ENCODE measurements at regions of chr17 and their contacts with region 1.

Region 1: GRCh38 chr17:7004398-7005253 is 7.8 kb upstream of the RNASEK start:
- DNase-seq: peak; percentile 53
- H3K4me3 Mint-ChIP-seq: no peak overlapping the region
- H3K27ac Mint-ChIP-seq: no peak overlapping the region
- H3K4me1 Mint-ChIP-seq: peaks cover 14% of the 10 kb centered on the region
- H3K27me3 Mint-ChIP-seq: no peaks in the 10 kb centered on the region

Region 2: DNA sequence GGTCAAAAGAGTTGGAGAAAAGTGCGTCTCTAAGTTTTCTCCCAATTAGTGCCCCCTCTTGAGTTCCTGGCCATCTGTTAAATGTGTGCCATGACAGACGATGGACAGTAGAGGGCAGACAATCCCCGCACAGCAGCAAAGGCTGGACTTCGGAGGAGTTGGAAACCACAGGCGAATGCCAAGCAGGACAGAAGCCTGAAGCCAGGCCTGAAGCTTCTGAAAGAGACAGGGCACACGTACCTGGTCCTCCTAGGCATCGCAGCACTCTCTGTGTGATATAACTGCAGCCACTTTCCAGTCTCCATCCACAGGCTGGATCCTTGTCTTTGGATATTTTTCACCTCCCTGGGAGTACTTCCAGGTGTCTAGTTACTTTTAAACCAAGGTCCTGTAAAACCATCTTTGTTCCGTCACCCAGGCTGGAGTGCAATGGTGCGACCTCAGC is 338.5 kb before region 1 on chr17:
- CTCF ChIA-PET with region 1: no interaction called
- intact Hi-C with region 1: loop called (anchors 1 kb)
- DNase-seq: peak; percentile 65
- H3K4me3 Mint-ChIP-seq: no peak overlapping the region
- H3K27ac Mint-ChIP-seq: no peak overlapping the region
- H3K4me1 Mint-ChIP-seq: peaks cover 10% of the 10 kb centered on the region
- H3K27me3 Mint-ChIP-seq: no peaks in the 10 kb centered on the region

Region 3: DNA sequence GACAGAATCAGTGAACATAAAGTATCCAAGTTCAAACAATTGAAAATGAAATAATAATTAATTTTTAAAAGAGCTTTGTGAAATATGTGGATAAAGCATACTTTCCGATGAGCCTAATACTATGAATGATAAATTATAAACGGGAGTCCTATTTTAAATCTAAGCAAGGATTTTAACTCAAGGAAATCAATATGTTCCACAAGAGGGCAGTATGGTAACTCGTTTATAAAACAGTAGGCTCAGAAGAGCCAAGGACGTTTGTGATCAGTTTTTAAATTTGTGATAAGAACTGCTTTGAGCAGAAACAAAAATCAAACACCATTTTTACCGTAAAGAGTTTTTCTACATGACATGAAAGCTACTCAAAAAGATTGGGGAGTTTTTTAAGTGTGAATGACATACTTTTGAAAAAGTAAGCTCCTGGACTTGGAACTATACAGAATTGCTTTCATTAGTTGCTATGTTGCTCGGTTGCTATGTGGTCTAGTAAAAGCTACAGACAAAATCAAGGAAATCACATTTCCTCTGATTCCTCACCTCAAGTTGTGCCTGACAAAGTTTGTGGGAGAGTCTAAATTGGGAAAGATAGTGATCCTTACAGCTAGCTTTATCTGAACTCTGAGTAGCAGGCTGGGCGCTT is 161.3 kb before region 1 on chr17:
- CTCF ChIA-PET with region 1: interaction called, 13 read pairs
- intact Hi-C with region 1: loop called (anchors 2 kb)
- DNase-seq: no peak
- H3K4me3 Mint-ChIP-seq: no peak overlapping the region
- H3K27ac Mint-ChIP-seq: no peak overlapping the region
- H3K4me1 Mint-ChIP-seq: peaks cover 5% of the 10 kb centered on the region
- H3K27me3 Mint-ChIP-seq: peaks cover 21% of the 10 kb centered on the region

Region 4: DNA sequence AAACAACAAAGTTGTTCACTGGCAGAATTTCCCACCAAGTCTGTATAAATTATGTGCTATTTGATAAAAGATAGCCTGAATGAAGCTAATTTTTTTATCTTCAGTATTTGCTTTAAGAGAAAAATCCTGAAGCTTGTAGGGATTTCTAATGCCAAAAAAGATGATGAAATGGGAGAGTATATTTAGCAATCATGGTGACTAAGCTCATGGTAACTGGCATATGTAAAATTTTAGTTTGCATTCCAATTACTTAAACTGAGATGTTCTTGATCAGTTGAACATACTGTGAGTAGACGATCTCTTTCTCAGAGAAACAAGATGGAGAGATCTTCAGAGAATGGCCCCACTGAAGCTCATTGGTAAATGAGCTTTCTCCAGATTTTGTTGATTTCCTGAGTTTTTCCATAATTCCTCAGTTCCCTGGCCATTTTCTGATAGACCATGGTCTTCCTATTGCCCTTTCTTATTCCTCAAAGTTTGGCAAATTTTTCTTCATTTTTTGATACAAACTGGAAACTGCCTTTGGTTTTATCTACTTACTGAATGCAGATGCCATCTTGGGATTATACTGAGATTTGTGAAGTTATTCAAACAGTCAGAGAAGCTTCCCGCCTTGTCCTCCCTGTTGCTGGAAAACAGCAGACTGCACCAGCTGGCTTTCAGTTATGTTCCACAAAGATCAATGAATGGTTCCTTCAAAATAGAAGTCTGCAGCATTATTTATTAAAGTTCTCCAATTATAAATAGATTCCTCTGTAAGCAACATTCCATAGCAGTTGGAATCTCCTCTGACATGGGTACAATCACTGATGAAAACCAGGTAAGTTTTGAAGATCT is 77.1 kb before region 1 on chr17:
- CTCF ChIA-PET with region 1: interaction called, 10 read pairs
- intact Hi-C with region 1: no loop called
- DNase-seq: no peak
- H3K4me3 Mint-ChIP-seq: no peak overlapping the region
- H3K27ac Mint-ChIP-seq: no peak overlapping the region
- H3K4me1 Mint-ChIP-seq: peaks cover 23% of the 10 kb centered on the region
- H3K27me3 Mint-ChIP-seq: no peaks in the 10 kb centered on the region

Region 5: DNA sequence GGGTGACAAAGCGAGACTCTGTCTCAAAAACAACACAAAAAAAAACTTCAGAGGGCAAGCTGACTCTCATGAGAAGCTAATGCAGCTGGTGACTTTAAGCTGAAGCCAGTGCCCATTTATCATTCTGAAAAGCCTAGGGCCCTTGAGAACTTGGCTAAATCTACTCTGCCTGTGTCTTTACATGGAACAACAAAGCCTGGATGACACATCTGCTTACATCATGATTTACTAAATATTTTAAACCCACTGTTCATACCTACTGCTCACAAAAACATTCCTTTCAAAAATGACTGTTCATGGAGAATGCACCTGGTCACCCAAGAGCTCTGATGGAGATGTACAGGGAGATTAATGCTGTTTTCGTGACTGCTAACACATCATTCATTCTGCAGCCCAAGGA is 14.8 kb before region 1 on chr17:
- CTCF ChIA-PET with region 1: interaction called, 19 read pairs
- intact Hi-C with region 1: no loop called
- DNase-seq: no peak
- H3K4me3 Mint-ChIP-seq: no peak overlapping the region
- H3K27ac Mint-ChIP-seq: no peak overlapping the region
- H3K4me1 Mint-ChIP-seq: no peaks in the 10 kb centered on the region
- H3K27me3 Mint-ChIP-seq: no peaks in the 10 kb centered on the region

Region 6: GRCh38 chr17:7021993-7022778 is 17.6 kb after region 1 on chr17:
- CTCF ChIA-PET with region 1: interaction called, 16 read pairs
- intact Hi-C with region 1: loop called (anchors 1 kb)
- DNase-seq: peak; percentile 80
- H3K4me3 Mint-ChIP-seq: peak overlapping the region; percentile 59
- H3K27ac Mint-ChIP-seq: peak overlapping the region; percentile 26
- H3K4me1 Mint-ChIP-seq: peaks cover 29% of the 10 kb centered on the region
- H3K27me3 Mint-ChIP-seq: peaks cover 4% of the 10 kb centered on the region